Activated naive CD4-positive, alpha-beta T cell treated with anti-CD3 and anti-CD28 coated beads, Interleukin-2, amount 10 ng/mL, durations not matched to agents 7 days and 5 days (primary cell): ENCODE measurements at regions of chr7 and their contacts with region 1.

Region 1: GRCh38 chr7:104883718-104884452 is 130.1 kb upstream of the KMT2E start:
- DNase-seq: peak; percentile 76
- H3K4me3 Mint-ChIP-seq: no peak overlapping the region
- H3K27ac Mint-ChIP-seq: no peak overlapping the region
- H3K4me1 Mint-ChIP-seq: peaks cover 17% of the 10 kb centered on the region
- H3K27me3 Mint-ChIP-seq: peaks cover 9% of the 10 kb centered on the region

Region 2: GRCh38 chr7:104862719-104863118 is 21.2 kb before region 1 on chr7:
- CTCF ChIA-PET with region 1: interaction called, 20 read pairs
- DNase-seq: no peak
- H3K4me3 Mint-ChIP-seq: no peak overlapping the region
- H3K27ac Mint-ChIP-seq: no peak overlapping the region
- H3K4me1 Mint-ChIP-seq: peaks cover 10% of the 10 kb centered on the region
- H3K27me3 Mint-ChIP-seq: peaks cover 28% of the 10 kb centered on the region

Region 3: DNA sequence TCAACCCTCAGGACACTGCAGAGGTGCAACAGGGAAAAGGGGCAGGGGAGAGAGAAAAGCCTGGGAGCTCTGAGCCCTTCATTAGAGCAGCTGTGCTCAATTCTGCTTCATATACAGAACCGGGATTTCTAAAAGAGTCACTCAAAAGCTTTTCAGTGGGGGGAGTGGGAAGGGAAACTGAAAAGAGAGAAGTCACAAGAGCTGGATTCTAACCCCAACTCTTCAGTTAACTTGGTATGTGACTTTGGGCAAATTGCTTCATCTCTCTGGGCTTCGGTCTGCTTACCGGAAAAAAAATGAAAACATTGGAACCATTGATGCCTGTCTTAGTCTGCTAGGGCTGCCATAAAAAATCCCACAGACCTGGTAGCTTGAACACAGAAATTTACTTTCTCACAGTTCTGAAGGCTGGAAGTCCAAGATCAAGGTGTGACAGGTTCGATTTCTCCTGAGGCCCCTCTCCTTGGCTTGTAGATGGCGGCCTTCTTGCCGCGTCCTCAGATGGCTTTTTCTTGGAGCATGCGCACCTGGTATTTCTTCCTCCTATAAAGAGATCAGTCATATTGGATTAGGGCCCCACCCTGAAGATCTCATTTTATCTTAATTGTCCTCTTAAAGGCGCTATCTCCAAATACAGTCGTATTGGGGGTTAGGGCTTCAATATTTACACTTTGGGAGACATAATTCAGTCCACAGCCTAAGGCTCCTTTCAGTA is 11.8 kb after region 1 on chr7:
- CTCF ChIA-PET with region 1: interaction called, 20 read pairs
- DNase-seq: no peak
- H3K4me3 Mint-ChIP-seq: no peak overlapping the region
- H3K27ac Mint-ChIP-seq: no peak overlapping the region
- H3K4me1 Mint-ChIP-seq: peaks cover 7% of the 10 kb centered on the region
- H3K27me3 Mint-ChIP-seq: no peaks in the 10 kb centered on the region

Region 4: GRCh38 chr7:104908636-104909035 is 24.8 kb after region 1 on chr7:
- CTCF ChIA-PET with region 1: interaction called, 101 read pairs
- DNase-seq: no peak
- H3K4me3 Mint-ChIP-seq: no peak overlapping the region
- H3K27ac Mint-ChIP-seq: no peak overlapping the region
- H3K4me1 Mint-ChIP-seq: no peaks in the 10 kb centered on the region
- H3K27me3 Mint-ChIP-seq: peaks cover 5% of the 10 kb centered on the region

Region 5: GRCh38 chr7:105112440-105113418 is 228.8 kb after region 1 on chr7:
- CTCF ChIA-PET with region 1: no interaction called
- DNase-seq: no peak
- H3K4me3 Mint-ChIP-seq: no peak overlapping the region
- H3K27ac Mint-ChIP-seq: peak overlapping the region; percentile 75
- H3K4me1 Mint-ChIP-seq: peaks cover 2% of the 10 kb centered on the region
- H3K27me3 Mint-ChIP-seq: no peaks in the 10 kb centered on the region